B cell (primary cell): ENCODE measurements at regions of chr2 and their contacts with region 1.

Region 1: GRCh38 chr2:155368934-155369333 is 670.4 kb downstream of the KCNJ3 start:
- DNase-seq: peak; percentile 8
- ATAC-seq: no peak
- H3K4me3 ChIP-seq: no peak overlapping the region
- H3K4me3 Mint-ChIP-seq: no peak overlapping the region
- H3K27ac ChIP-seq: no peak overlapping the region
- H3K27ac Mint-ChIP-seq: no peak overlapping the region
- H3K4me1 ChIP-seq: no peaks in the 10 kb centered on the region
- H3K4me1 Mint-ChIP-seq: no peaks in the 10 kb centered on the region
- H3K27me3 ChIP-seq: no peaks in the 10 kb centered on the region
- H3K27me3 Mint-ChIP-seq: peaks cover 2% of the 10 kb centered on the region
- CTCF ChIP-seq: peak; percentile 49

Region 2: DNA sequence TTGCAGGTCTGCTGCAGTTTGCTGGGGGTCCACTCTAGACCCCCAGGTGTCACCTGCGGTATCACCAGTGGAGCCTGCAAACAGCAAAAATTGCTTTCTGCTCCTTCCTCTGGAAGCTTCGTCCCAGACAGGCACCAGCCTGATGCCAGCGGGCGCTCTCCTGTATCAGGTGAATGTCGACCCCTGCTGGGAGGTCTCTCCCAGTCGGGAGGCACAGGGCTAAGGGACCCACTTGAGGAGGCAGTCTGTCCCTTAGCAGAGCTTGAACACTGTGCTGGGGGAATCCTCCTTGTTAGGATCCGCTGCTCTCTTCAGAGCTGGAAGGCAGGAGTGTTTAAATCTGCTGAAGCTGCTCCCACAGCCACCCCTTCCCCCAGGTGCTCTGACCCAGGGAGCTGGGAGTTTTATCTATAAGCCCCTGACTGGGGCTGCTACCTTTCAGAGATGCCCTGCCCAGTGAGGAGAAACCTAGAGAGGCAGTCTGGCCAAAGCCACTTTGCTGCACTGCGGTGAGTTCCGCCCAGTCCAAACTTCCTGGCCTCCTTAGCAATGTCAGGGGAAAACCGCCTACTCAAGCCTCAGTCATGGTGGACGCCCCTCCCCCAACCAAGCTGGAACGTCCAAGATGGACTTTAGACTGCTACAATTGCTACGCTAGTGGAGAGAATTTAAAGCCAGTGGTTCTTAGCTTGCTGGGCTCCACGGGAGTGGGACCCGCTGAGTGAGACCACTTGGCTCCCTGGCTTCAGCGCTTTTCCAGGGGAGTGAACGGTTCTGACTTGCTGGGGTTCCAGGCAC is 18.0 kb before region 1 on chr2:
- CTCF ChIA-PET with region 1: no interaction called
- POLR2A ChIA-PET with region 1: no interaction called
- intact Hi-C with region 1: no loop called
- DNase-seq: no peak
- ATAC-seq: no peak
- H3K4me3 ChIP-seq: no peak overlapping the region
- H3K4me3 Mint-ChIP-seq: no peak overlapping the region
- H3K27ac ChIP-seq: no peak overlapping the region
- H3K27ac Mint-ChIP-seq: no peak overlapping the region
- H3K4me1 ChIP-seq: no peaks in the 10 kb centered on the region
- H3K4me1 Mint-ChIP-seq: no peaks in the 10 kb centered on the region
- H3K27me3 ChIP-seq: no peaks in the 10 kb centered on the region
- H3K27me3 Mint-ChIP-seq: no peaks in the 10 kb centered on the region
- CTCF ChIP-seq: no peak

Region 3: GRCh38 chr2:156892467-156893281 is 1523.7 kb after region 1 on chr2:
- CTCF ChIA-PET with region 1: no interaction called
- POLR2A ChIA-PET with region 1: no interaction called
- intact Hi-C with region 1: loop called (anchors 2 kb)
- DNase-seq: peak; percentile 17
- ATAC-seq: no peak
- H3K4me3 ChIP-seq: no peak overlapping the region
- H3K4me3 Mint-ChIP-seq: no peak overlapping the region
- H3K27ac ChIP-seq: no peak overlapping the region
- H3K27ac Mint-ChIP-seq: no peak overlapping the region
- H3K4me1 ChIP-seq: no peaks in the 10 kb centered on the region
- H3K4me1 Mint-ChIP-seq: no peaks in the 10 kb centered on the region
- H3K27me3 ChIP-seq: peaks cover 0 to 4% (median 1%) of the 10 kb centered on the region in 4 experiments
- H3K27me3 Mint-ChIP-seq: peaks cover 8% of the 10 kb centered on the region
- CTCF ChIP-seq: peak; percentile 39

Region 4: DNA sequence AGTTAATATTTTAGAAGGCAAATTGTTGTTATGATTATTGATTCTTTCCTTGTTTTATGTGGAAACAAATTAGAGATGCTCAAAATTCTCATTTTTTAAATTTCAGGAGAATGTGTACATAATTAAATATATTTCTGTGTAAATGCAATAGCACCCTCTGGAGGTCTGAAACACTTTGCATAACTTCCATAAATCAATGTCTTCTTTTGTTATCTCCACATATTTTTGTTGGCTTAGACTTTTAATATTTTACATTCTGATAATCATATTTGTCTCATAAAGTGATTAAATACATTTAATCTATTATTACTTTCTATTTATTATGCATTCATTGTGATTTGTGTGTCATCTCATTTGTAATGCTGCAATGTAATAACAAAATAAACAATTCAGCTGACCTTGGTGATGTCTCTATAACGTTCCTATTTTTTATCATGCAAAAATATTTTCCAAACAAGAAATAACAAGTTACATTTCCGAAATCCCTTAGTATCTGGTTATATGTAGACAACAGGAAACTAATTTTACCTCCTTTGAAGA is 1686.8 kb after region 1 on chr2:
- CTCF ChIA-PET with region 1: interaction called, 3 read pairs
- POLR2A ChIA-PET with region 1: no interaction called
- intact Hi-C with region 1: loop called (anchors 2 kb)
- DNase-seq: no peak
- ATAC-seq: no peak
- H3K4me3 ChIP-seq: no peak overlapping the region
- H3K4me3 Mint-ChIP-seq: no peak overlapping the region
- H3K27ac ChIP-seq: no peak overlapping the region
- H3K27ac Mint-ChIP-seq: no peak overlapping the region
- H3K4me1 ChIP-seq: no peaks in the 10 kb centered on the region
- H3K4me1 Mint-ChIP-seq: no peaks in the 10 kb centered on the region
- H3K27me3 ChIP-seq: no peaks in the 10 kb centered on the region
- H3K27me3 Mint-ChIP-seq: peaks cover 4% of the 10 kb centered on the region
- CTCF ChIP-seq: peak; percentile 43

Region 5: GRCh38 chr2:157194097-157194688 is 1825.3 kb after region 1 on chr2:
- CTCF ChIA-PET with region 1: interaction called, 4 read pairs
- POLR2A ChIA-PET with region 1: no interaction called
- intact Hi-C with region 1: loop called (anchors 1 kb)
- DNase-seq: peak; percentile 33
- ATAC-seq: no peak
- H3K4me3 ChIP-seq: no peak overlapping the region
- H3K4me3 Mint-ChIP-seq: no peak overlapping the region
- H3K27ac ChIP-seq: no peak overlapping the region
- H3K27ac Mint-ChIP-seq: no peak overlapping the region
- H3K4me1 ChIP-seq: no peaks in the 10 kb centered on the region
- H3K4me1 Mint-ChIP-seq: no peaks in the 10 kb centered on the region
- H3K27me3 ChIP-seq: no peaks in the 10 kb centered on the region
- H3K27me3 Mint-ChIP-seq: peaks cover 3% of the 10 kb centered on the region
- CTCF ChIP-seq: peak; percentile 64